ENCODE measurements at regions of chr4 and their contacts with region 1.

Region 1: DNA sequence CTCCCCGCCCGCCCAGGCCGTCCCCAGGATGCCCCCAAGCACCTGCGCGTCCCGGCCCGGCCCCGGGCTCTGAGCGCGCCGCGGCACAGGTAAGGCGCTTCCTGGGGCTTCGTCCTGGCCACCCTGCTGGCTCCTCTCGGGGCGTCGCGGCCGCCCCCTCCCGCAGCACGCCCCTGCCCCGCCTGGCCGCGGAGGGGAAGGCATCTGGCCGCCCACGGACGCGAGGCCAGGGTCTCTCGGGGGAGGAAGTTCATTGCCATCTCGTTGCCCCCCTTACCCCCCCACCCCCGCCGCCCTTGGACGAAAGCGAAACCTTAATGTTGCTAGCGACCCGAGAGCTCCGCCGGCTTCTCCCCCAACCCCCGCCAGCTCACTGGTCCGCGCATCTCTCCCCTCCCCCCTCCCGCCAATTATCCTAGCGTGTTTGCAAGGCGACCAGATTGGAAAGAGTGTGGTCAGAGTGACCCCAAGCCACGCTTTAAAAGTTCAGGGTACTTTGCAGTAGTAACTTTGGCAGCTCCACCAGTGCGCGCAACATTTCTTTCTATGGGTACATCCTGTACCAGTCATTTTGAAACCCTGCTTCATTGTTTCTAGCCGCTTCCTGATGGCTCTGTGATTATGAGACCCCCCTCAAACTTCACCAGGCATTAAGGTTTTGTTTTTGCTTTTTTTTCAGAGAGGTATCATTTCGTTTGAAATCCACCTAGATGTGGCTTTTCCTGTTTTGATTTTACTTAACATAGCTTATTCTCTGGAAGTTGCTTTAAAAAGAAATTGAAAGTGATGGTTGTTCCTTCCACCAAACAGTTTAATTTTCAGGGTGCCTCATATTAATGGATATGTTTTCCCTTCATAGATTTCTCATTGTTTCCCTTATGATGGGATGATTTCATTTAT is 626 bp downstream of the TBC1D1 start:
- DNase-seq: no peak
- H3K4me3 ChIP-seq: peak overlapping the region; percentile 72 to 91 (median 77)
- H3K27ac ChIP-seq: peak overlapping the region; percentile 61 to 74
- H3K4me1 ChIP-seq: peaks cover 0 to 5% of the 10 kb centered on the region in 2 donors
- H3K27me3 ChIP-seq: no peaks in the 10 kb centered on the region
- CTCF ChIP-seq: no peak
- POLR2A ChIP-seq: no peak

Region 2: DNA sequence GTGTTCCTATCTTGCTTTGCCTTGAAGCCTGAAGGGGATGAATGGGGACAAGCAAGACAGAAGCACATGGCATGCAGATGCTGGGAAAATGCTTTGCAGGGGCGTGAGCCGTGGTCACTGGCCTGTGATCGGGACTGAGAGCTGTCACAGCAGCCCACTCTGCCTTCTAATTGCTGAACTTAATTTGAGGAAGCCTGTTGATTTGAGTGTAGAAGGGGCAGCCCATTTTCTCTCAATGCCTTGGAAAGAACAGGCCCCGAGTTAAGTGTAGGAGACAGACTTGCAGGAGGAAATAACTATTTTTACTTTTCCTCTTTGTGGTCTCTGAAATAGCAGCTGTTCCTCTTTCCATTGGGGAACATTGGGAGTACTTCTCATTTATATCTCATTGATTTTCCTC is 26.7 kb before region 1 on chr4:
- intact Hi-C with region 1: loop called (anchors 2 kb)
- DNase-seq: no peak
- H3K4me3 ChIP-seq: no peak overlapping the region
- H3K27ac ChIP-seq: no peak overlapping the region
- H3K4me1 ChIP-seq: no peaks in the 10 kb centered on the region
- H3K27me3 ChIP-seq: no peaks in the 10 kb centered on the region
- CTCF ChIP-seq: no peak
- POLR2A ChIP-seq: no peak

Region 3: GRCh38 chr4:37922328-37922727 is 30.8 kb after region 1 on chr4:
- intact Hi-C with region 1: loop called (anchors 2 kb)
- DNase-seq: no peak
- H3K4me3 ChIP-seq: no peak overlapping the region
- H3K27ac ChIP-seq: no peak overlapping the region
- H3K4me1 ChIP-seq: no peaks in the 10 kb centered on the region
- H3K27me3 ChIP-seq: no peaks in the 10 kb centered on the region
- CTCF ChIP-seq: no peak
- POLR2A ChIP-seq: no peak

Region 4: DNA sequence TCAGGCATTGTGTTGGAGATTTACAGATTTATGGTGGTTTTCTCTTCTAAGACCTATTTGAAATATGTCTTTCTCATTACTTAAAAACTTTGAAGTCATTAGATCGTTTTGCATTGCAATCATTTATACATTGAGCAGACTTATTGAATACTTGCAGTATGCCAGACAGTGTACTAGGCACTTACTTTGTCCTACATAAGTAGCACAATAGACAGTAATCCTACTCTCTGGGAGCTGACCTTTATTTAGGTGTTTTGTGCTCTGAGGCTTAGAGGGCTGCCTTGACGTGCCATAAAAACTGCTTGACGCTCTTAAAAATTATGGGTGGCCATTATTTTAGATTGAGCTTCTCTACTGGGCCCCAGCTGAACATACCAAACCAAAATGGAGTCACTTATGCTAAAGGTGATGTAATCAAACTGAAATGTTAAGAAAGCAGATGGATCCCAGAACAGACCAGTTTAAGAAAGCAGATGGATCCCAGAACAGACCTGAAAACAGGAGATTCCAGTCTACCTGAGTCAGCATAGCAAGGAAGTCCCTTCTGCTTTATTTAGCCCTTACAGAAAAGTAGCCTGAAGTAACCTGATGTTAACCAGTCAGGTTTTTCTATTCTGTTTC is 111.1 kb after region 1 on chr4:
- intact Hi-C with region 1: no loop called
- DNase-seq: no peak
- H3K4me3 ChIP-seq: no peak overlapping the region
- H3K27ac ChIP-seq: no peak overlapping the region
- H3K4me1 ChIP-seq: no peaks in the 10 kb centered on the region
- H3K27me3 ChIP-seq: no peaks in the 10 kb centered on the region
- CTCF ChIP-seq: no peak
- POLR2A ChIP-seq: no peak